ENCODE measurements at regions of chr5 and their contacts with region 1.

Region 1: GRCh38 chr5:103295871-103296270 is 37.3 kb downstream of the MACIR start:
- DNase-seq: no peak
- H3K4me3 ChIP-seq: no peak overlapping the region
- H3K27ac ChIP-seq: peak overlapping the region in 38 of 59 donors; percentile 1 to 75 (median 46)
- H3K27me3 ChIP-seq: no peaks in the 10 kb centered on the region
- CTCF ChIP-seq: no peak

Region 2: DNA sequence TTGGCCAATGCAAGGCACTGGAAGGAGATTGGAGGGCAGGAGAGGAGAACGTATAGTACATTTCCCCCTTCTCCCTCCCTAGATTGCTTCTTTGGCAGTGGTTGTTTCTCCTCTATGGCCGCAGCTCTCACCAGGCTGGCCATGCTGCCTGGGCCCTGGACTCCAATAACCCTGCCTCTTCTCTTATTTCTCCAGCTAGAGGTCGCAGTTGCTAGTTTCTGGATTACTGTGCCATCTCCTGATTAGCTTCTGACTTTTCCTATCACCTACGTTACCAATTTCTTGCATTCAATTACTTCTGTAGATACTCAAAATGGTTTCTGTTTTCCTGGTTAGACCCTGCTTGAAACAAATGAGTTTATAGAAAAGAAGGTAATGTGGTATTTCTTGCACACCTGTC is 39.7 kb before region 1 on chr5:
- intact Hi-C with region 1: no loop called
- DNase-seq: no peak
- H3K4me3 ChIP-seq: no peak overlapping the region
- H3K27ac ChIP-seq: peak overlapping the region in 2 of 59 donors; percentile 2 to 13
- H3K27me3 ChIP-seq: no peaks in the 10 kb centered on the region
- CTCF ChIP-seq: peak in 31 of 56 donors; percentile 11 to 58 (median 30)

Region 3: DNA sequence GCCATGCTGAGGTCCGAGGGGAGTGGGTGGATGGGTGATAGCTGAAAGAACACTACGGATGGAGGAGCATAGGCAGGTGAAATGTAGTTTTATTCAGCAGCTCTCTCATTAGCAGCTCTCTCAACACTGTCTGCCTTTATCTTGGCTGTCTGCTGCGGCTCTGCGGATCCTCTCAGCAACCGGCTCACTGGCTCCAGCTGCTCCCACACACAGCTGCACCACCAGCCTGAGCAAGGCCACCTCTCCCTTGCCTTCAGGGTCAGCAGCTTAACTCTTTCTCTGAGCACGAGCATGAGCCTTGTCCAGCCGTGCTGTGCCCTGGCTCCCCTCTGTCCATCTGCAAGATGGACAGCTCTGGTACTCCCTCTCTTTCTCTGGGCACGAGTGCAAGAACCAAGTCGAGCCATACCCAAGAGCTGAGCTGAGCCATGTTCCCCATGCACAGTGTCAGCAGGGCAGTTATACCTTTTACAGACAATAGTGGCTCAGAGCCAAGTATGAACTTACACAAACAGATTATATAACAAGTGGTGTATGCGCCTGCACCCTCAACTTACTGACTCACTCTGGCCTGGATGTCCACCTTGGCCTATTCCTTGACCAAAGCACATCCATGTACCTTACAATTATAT is 71.2 kb after region 1 on chr5:
- intact Hi-C with region 1: loop called in 1 of 2 experiments (anchors 5 kb)
- DNase-seq: no peak
- H3K4me3 ChIP-seq: no peak overlapping the region
- H3K27ac ChIP-seq: peak overlapping the region in 1 of 59 donors; percentile 0
- H3K27me3 ChIP-seq: no peaks in the 10 kb centered on the region
- CTCF ChIP-seq: no peak